Naive thymus-derived CD4-positive, alpha-beta T cell (primary cell): ENCODE measurements at regions of chr6 and their contacts with region 1.

Region 1: DNA sequence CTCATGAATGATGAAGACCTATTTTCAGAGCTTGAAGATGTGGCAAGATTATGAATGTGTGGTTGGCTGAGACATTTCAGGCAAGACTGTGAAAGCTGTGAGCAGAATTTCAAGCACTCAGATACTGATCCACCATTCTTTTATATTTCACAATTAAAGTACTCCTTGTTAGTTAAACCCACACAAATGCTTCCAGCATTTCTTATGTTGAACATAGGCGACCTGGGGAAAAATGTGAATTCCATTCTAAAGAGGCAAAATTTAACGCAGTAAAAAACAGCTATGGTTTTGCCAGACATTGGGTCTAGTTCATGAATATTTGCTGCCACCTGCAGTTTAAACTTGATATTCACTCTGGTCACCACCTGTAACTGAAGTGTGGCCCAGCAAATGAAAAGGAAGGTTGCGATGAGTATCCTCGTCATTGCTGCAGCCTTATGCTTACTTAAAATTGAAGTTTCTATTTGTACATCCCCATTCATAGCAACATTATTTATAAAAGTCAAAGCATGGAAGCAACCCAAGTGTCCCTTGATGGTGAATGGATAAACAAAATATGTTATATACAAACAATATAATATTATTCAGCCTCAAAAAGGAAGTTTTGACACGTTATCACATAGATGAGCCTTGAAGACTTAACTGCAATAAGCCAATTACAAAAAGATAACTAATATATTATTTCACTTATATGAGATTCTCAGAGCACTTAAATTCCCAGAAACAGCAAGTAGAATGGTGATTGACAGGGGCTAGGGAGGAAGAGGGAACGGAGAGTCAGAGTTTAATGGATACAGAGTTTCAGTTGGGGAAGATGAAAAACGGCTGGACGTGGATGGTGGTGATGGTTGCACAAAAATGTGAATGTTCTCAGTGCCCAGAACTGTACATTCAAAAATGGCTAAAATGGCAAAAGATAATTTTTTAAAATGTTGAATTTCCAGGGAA is 32.4 kb upstream of the FAM184A start:
- DNase-seq: peak in 7 of 9 donors; percentile 47 to 76 (median 73)
- ATAC-seq: peak; percentile 85
- H3K4me3 ChIP-seq: no peak overlapping the region
- H3K4me3 Mint-ChIP-seq: peak overlapping the region in 4 of 10 donors; percentile 34 to 61 (median 52)
- H3K27ac ChIP-seq: no peak overlapping the region
- H3K27ac Mint-ChIP-seq: peak overlapping the region in 1 of 9 donors; percentile 21
- H3K4me1 ChIP-seq: peaks cover 0 to 8% of the 10 kb centered on the region in 2 donors
- H3K4me1 Mint-ChIP-seq: peaks cover 2 to 22% (median 13%) of the 10 kb centered on the region in 7 donors
- H3K27me3 ChIP-seq: no peaks in the 10 kb centered on the region
- H3K27me3 Mint-ChIP-seq: peaks cover 0 to 4% (median 0%) of the 10 kb centered on the region in 5 donors

Region 2: DNA sequence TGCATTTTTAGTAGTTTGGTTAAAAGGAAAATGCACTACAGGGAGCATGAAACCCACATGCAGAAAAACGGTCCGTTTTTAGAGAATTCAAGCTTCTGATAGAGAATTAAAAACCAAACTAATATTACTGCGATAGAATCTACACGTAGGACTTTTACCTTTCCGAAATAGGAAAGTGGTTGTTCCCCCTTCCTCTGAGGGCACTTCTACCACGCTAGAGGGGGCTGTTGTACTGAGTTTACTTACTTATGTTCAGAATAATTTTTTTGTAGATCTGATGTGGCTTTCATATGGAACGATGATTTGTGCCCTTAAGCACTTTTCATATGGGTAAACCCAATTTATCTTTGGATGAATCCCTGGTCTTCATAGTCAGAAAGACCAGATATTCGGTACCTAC is 827.1 kb before region 1 on chr6:
- CTCF ChIA-PET with region 1: interaction called, 3 read pairs
- POLR2A ChIA-PET with region 1: no interaction called
- intact Hi-C with region 1: loop called in 1 of 2 experiments (anchors 1 kb)
- DNase-seq: peak in 7 of 9 donors; percentile 12 to 69 (median 59)
- ATAC-seq: peak; percentile 68
- H3K4me3 ChIP-seq: no peak overlapping the region
- H3K4me3 Mint-ChIP-seq: no peak overlapping the region
- H3K27ac ChIP-seq: no peak overlapping the region
- H3K27ac Mint-ChIP-seq: peak overlapping the region in 1 of 9 donors; percentile 40
- H3K4me1 ChIP-seq: no peaks in the 10 kb centered on the region
- H3K4me1 Mint-ChIP-seq: peaks cover 0 to 7% (median 0%) of the 10 kb centered on the region in 7 donors
- H3K27me3 ChIP-seq: no peaks in the 10 kb centered on the region
- H3K27me3 Mint-ChIP-seq: peaks cover 6 to 38% (median 14%) of the 10 kb centered on the region in 5 donors

Region 3: GRCh38 chr6:118776607-118777549 is 334.0 kb before region 1 on chr6:
- CTCF ChIA-PET with region 1: no interaction called
- POLR2A ChIA-PET with region 1: no interaction called
- intact Hi-C with region 1: loop called in 1 of 2 experiments (anchors 10 kb)
- DNase-seq: peak in 8 of 9 donors; percentile 42 to 77 (median 65)
- ATAC-seq: peak; percentile 92
- H3K4me3 ChIP-seq: no peak overlapping the region
- H3K4me3 Mint-ChIP-seq: peak overlapping the region; percentile 1 to 75 (median 48)
- H3K27ac ChIP-seq: no peak overlapping the region
- H3K27ac Mint-ChIP-seq: peak overlapping the region in 8 of 9 donors; percentile 12 to 87 (median 75)
- H3K4me1 ChIP-seq: peaks cover 4 to 11% of the 10 kb centered on the region in 2 donors
- H3K4me1 Mint-ChIP-seq: peaks cover 16 to 31% (median 23%) of the 10 kb centered on the region in 7 donors
- H3K27me3 ChIP-seq: no peaks in the 10 kb centered on the region
- H3K27me3 Mint-ChIP-seq: peaks cover 0 to 17% (median 0%) of the 10 kb centered on the region in 5 donors

Region 4: GRCh38 chr6:118963003-118963402 is 147.9 kb before region 1 on chr6:
- CTCF ChIA-PET with region 1: interaction called, 172 read pairs
- POLR2A ChIA-PET with region 1: interaction called, 10 read pairs
- intact Hi-C with region 1: loop called (anchors 1 kb)
- DNase-seq: peak in 4 of 9 donors; percentile 6 to 20 (median 12)
- ATAC-seq: no peak
- H3K4me3 ChIP-seq: no peak overlapping the region
- H3K4me3 Mint-ChIP-seq: no peak overlapping the region
- H3K27ac ChIP-seq: no peak overlapping the region
- H3K27ac Mint-ChIP-seq: no peak overlapping the region
- H3K4me1 ChIP-seq: no peaks in the 10 kb centered on the region
- H3K4me1 Mint-ChIP-seq: peaks cover 0 to 14% (median 7%) of the 10 kb centered on the region in 7 donors
- H3K27me3 ChIP-seq: no peaks in the 10 kb centered on the region
- H3K27me3 Mint-ChIP-seq: no peaks in the 10 kb centered on the region

Region 5: GRCh38 chr6:119052292-119052889 is 58.5 kb before region 1 on chr6:
- CTCF ChIA-PET with region 1: interaction called, 3 read pairs
- POLR2A ChIA-PET with region 1: no interaction called
- intact Hi-C with region 1: loop called in 1 of 2 experiments (anchors 2 kb)
- DNase-seq: peak in 3 of 9 donors; percentile 13 to 26 (median 24)
- ATAC-seq: peak; percentile 61
- H3K4me3 ChIP-seq: no peak overlapping the region
- H3K4me3 Mint-ChIP-seq: peak overlapping the region in 2 of 10 donors; percentile 9 to 14
- H3K27ac ChIP-seq: no peak overlapping the region
- H3K27ac Mint-ChIP-seq: peak overlapping the region in 6 of 9 donors; percentile 1 to 74 (median 46)
- H3K4me1 ChIP-seq: no peaks in the 10 kb centered on the region
- H3K4me1 Mint-ChIP-seq: peaks cover 9 to 43% (median 24%) of the 10 kb centered on the region in 7 donors
- H3K27me3 ChIP-seq: no peaks in the 10 kb centered on the region
- H3K27me3 Mint-ChIP-seq: no peaks in the 10 kb centered on the region